ENCODE measurements at regions of chr4 and their contacts with region 1.

Region 1: GRCh38 chr4:8410641-8411271 is 29.8 kb downstream of the ACOX3 start:
- DNase-seq: peak; percentile 33
- H3K4me3 ChIP-seq: no peak overlapping the region
- H3K27ac ChIP-seq: no peak overlapping the region
- H3K4me1 ChIP-seq: peaks cover 5% of the 10 kb centered on the region
- H3K27me3 ChIP-seq: no peaks in the 10 kb centered on the region
- CTCF ChIP-seq: peak in 1 of 2 donors; percentile 13

Region 2: GRCh38 chr4:8241895-8242696 is 168.7 kb before region 1 on chr4:
- CTCF ChIA-PET with region 1: no interaction called
- dilution Hi-C with region 1: no loop called
- in situ Hi-C with region 1: no loop called
- intact Hi-C with region 1: loop called (anchors 1 kb)
- DNase-seq: peak; percentile 39
- H3K4me3 ChIP-seq: no peak overlapping the region
- H3K27ac ChIP-seq: no peak overlapping the region
- H3K4me1 ChIP-seq: peaks cover 4% of the 10 kb centered on the region
- H3K27me3 ChIP-seq: no peaks in the 10 kb centered on the region
- CTCF ChIP-seq: peak; percentile 75 to 95

Region 3: DNA sequence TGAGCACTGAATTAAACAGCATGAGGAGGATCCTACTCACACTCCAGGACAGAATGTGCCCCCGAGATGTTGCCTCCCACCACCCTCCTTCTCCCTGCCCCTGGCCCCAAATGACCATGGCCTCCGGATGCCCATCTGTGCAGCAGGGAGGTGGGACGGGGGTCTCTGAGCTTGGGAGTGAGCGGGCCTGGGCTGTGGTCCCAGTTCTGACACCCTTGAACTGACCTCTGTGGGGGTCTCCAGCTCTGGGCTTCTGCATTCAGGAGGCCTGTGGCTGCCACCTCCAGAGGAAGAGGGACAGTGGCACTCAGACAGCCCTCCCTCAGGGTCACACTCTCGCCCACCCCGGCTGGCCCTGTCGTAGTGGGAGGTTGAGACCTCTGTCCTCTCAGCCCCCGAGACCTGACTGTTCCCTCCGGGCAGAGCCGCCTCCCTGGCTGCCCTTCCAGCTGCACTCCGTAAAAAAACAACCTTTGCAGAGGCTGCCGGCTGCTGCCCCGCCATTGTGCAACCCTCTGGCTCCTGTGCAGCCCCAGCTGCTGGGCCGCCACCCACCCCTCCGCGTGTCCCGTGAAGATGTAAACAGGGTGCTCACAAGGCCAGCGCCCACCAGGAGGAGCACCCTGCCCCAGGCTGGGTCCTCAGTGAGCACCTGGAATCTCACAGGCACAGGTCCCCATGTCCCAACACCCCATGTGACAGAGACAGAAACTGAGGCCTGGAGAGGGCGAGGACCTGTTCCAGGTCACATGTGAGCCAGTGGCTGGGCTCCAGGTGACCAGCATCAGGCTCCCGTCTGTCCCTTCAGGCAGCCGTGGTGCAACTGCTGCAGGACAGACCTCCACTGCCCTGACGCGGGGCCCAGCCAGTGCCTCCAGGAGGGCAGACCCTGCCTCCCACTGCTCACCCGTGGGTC is 101.6 kb before region 1 on chr4:
- CTCF ChIA-PET with region 1: no interaction called
- dilution Hi-C with region 1: loop called (anchors 5 kb)
- in situ Hi-C with region 1: no loop called
- intact Hi-C with region 1: no loop called
- DNase-seq: no peak
- H3K4me3 ChIP-seq: no peak overlapping the region
- H3K27ac ChIP-seq: no peak overlapping the region
- H3K4me1 ChIP-seq: peaks cover 9% of the 10 kb centered on the region
- H3K27me3 ChIP-seq: no peaks in the 10 kb centered on the region
- CTCF ChIP-seq: no peak

Region 4: DNA sequence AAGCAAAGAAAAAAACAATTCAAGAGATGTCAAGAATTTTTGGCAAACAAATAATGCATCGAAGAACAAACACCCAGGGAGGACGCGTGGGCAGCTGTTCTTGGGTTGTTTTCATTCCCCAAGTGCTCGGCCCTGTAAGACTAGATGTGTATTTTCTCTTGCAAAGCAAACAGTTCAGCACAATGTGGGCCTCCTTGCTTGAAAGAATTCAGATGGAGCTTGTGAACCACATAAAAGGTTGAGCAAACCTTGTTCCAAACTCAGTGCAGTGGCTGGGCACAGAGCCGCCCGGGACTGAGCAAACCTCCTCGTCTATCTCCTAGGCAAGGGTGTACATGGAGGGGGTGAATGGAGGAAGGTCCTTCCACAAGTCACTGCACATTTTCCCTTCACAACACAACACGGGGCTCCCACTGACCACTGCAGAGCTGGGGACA is 58.8 kb before region 1 on chr4:
- CTCF ChIA-PET with region 1: no interaction called
- dilution Hi-C with region 1: no loop called
- in situ Hi-C with region 1: no loop called
- intact Hi-C with region 1: no loop called
- DNase-seq: no peak
- H3K4me3 ChIP-seq: no peak overlapping the region
- H3K27ac ChIP-seq: no peak overlapping the region
- H3K4me1 ChIP-seq: peaks cover 24% of the 10 kb centered on the region
- H3K27me3 ChIP-seq: no peaks in the 10 kb centered on the region
- CTCF ChIP-seq: no peak

Region 5: DNA sequence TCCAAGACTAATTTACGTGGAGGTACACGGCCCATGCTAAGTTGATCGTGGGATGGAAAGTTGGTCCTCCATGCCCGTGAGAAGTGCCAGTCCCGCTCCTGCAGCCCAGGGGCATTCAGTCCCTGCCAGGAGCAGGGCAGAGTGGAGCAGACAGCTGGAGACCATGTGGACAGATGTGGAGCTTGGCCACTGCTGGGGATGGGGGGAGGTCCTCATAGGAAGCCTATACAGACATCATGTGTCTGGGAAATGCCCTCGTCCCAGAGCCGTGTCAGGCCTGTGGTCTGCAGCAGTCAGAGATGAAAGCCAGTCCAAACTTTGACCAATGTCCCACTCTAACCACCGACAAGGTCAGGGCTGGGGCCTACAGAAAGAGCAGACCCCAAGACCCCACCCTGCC is 300.2 kb after region 1 on chr4:
- CTCF ChIA-PET with region 1: no interaction called
- dilution Hi-C with region 1: no loop called
- in situ Hi-C with region 1: no loop called
- intact Hi-C with region 1: no loop called
- DNase-seq: no peak
- H3K4me3 ChIP-seq: no peak overlapping the region
- H3K27ac ChIP-seq: no peak overlapping the region
- H3K4me1 ChIP-seq: no peaks in the 10 kb centered on the region
- H3K27me3 ChIP-seq: no peaks in the 10 kb centered on the region
- CTCF ChIP-seq: no peak

Measured in mammary epithelial cell (primary cell).